CD14-positive monocyte (primary cell): ENCODE measurements at regions of chr3 and their contacts with region 1.

Region 1: DNA sequence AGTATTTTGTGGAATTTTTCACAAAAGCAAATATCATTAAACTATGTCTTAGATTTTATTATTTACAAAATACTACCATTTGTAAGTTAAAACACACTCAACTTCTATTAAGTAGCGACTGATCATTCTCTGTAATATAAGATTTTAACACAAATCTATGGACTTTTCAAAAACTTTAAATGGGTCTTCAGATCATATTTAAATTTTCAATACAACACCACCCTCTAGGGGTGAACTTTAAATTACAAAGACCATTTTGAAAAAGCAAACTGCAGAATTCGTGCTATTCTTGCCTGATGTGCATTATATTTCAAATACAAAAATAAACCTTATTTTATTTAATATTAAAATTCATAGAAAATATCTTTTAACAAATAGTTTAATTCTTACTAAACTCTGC is 8.2 kb upstream of the VGLL4 start:
- DNase-seq: peak; percentile 13 to 35 (median 23)
- H3K4me3 ChIP-seq: no peak overlapping the region
- H3K4me3 Mint-ChIP-seq: no peak overlapping the region
- H3K27ac ChIP-seq: no peak overlapping the region
- H3K27ac Mint-ChIP-seq: no peak overlapping the region
- H3K4me1 ChIP-seq: no peaks in the 10 kb centered on the region
- H3K4me1 Mint-ChIP-seq: no peaks in the 10 kb centered on the region
- H3K27me3 ChIP-seq: no peaks in the 10 kb centered on the region
- H3K27me3 Mint-ChIP-seq: peaks cover 0 to 5% (median 3%) of the 10 kb centered on the region in 3 donors
- CTCF ChIP-seq: peak; percentile 73

Region 2: DNA sequence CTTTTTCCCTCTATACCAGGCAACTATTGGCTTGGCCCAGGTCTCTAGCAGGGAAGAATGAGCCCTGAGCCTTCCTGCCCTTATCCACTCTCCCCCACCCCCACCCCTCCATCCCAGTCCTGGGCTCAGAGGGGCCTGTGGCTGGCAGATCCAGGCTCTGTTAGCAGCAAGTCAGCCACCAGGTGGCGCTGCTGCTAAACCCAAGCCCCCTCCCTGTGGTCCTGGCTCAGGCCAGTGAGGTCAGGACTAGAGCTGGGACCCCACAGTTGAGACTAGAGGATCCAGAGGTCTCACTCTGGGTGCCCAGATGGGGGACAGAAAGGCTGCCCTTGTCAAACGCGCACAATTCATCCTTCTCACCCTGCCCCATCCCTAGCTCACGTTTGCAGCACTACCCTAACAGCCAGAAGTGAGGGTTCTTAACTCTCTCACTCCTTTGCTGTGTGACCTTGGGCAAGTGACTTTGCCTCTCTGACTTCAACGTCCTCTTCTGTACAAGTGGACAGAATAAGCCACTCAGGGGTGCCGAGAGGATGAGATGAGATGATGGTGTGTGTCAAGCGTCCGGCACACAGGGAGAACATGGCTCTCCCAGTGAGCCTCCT is 706.1 kb before region 1 on chr3:
- intact Hi-C with region 1: loop called in 1 of 2 experiments (anchors 10 kb)
- DNase-seq: peak; percentile 39 to 54 (median 53)
- H3K4me3 ChIP-seq: no peak overlapping the region
- H3K4me3 Mint-ChIP-seq: no peak overlapping the region
- H3K27ac ChIP-seq: no peak overlapping the region
- H3K27ac Mint-ChIP-seq: no peak overlapping the region
- H3K4me1 ChIP-seq: no peaks in the 10 kb centered on the region
- H3K4me1 Mint-ChIP-seq: no peaks in the 10 kb centered on the region
- H3K27me3 ChIP-seq: no peaks in the 10 kb centered on the region
- H3K27me3 Mint-ChIP-seq: peaks cover 2 to 10% (median 6%) of the 10 kb centered on the region in 3 donors
- CTCF ChIP-seq: peak; percentile 86

Region 3: DNA sequence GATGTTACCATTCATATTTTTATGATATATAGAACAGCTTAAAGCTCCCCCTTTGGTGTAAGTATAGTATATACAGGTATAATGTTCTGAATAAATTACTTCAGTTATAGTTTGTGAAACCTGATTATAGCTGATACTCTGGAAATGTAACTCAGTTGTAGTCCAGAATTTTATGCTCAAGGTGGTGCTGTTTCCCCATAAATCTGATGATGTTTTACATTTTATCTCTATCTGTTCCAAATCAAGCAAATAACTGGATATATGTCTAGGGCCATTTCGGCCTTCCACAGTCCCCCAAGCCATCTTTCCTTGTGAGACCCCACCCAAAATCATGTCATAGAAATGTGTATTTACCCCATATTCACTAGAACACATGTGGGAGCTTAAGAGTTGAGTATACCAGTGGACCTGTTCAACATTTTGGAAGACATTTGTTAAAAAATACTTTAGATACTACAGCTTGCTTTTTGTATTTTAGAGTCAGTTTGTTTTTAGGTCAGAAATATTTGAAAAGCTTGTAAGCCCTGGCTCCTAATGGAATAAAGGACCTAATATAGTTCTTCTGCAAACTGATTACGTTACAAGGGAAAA is 272.6 kb before region 1 on chr3:
- intact Hi-C with region 1: loop called (anchors 2 to 5 kb)
- DNase-seq: no peak
- H3K4me3 ChIP-seq: no peak overlapping the region
- H3K4me3 Mint-ChIP-seq: no peak overlapping the region
- H3K27ac ChIP-seq: no peak overlapping the region
- H3K27ac Mint-ChIP-seq: peak overlapping the region in 1 of 7 donors; percentile 51
- H3K4me1 ChIP-seq: no peaks in the 10 kb centered on the region
- H3K4me1 Mint-ChIP-seq: peaks cover 2% of the 10 kb centered on the region
- H3K27me3 ChIP-seq: no peaks in the 10 kb centered on the region
- H3K27me3 Mint-ChIP-seq: peaks cover 0 to 3% (median 0%) of the 10 kb centered on the region in 3 donors
- CTCF ChIP-seq: peak; percentile 54